SK-N-SH (cell line): ENCODE measurements at regions of chr4 and their contacts with region 1.

Region 1: GRCh38 chr4:3480528-3481112 is 17.5 kb downstream of the DOK7 start:
- DNase-seq: peak; percentile 92
- H3K4me3 ChIP-seq: peak overlapping the region in 1 of 2 experiments; percentile 57; a peak in 1 of 4 replicates
- H3K27ac ChIP-seq: no peak overlapping the region
- H3K4me1 ChIP-seq: peaks cover 0 to 19% of the 10 kb centered on the region in 2 experiments; a peak in 1 of 4 replicates
- H3K27me3 ChIP-seq: no peaks in the 10 kb centered on the region
- CTCF ChIP-seq: peak; percentile 97
- EP300 ChIP-seq: no peak
- RAD21 ChIP-seq: peak; percentile 79

Region 2: DNA sequence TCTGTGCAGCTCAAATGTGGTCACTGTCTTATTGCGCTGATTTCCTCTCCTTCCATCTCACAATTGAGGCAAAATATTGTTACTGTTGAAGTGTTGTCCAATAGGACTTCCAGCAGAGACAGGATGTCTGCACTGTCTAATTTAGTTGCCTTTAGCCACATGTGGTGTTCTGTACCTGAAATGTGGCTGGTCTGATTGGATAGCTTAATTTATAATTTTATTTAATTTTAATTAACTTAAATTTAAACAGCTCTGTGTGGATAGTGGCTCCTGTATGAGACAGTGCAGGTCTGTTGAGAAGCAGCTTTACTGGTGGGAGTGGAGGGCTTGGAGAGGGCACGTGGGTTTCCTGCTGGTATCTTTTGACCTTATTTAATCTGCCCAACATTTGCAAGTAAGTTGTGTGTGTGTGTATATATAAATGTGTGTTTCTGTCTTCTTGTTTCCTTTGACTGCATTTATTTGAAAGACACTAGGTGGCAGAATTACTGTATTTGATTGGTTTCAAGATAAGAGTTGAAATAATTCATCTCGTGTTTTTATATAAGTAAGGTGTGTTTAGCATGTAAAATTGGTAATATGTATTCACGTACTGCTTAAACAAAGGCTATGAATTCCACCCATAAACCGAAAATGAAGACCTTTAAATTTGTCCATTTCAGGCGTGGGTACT is 287.0 kb before region 1 on chr4:
- CTCF ChIA-PET with region 1: interaction called, 13 read pairs
- POLR2A ChIA-PET with region 1: no interaction called
- DNase-seq: peak; percentile 53
- H3K4me3 ChIP-seq: no peak overlapping the region
- H3K27ac ChIP-seq: peak overlapping the region in 1 of 2 experiments; percentile 94; a peak in 2 of 4 replicates
- H3K4me1 ChIP-seq: peaks cover 0 to 36% of the 10 kb centered on the region in 2 experiments; a peak in 2 of 4 replicates
- H3K27me3 ChIP-seq: no peaks in the 10 kb centered on the region
- CTCF ChIP-seq: peak; percentile 55
- EP300 ChIP-seq: peak in 1 of 2 experiments; percentile 44; a peak in 1 of 4 replicates
- RAD21 ChIP-seq: peak; percentile 40; the same call in 1 of the 2 replicates

Region 3: GRCh38 chr4:3442959-3443749 is 37.5 kb before region 1 on chr4:
- CTCF ChIA-PET with region 1: interaction called, 18 read pairs
- POLR2A ChIA-PET with region 1: no interaction called
- DNase-seq: peak; percentile 94
- H3K4me3 ChIP-seq: no peak overlapping the region
- H3K27ac ChIP-seq: no peak overlapping the region
- H3K4me1 ChIP-seq: no peaks in the 10 kb centered on the region
- H3K27me3 ChIP-seq: no peaks in the 10 kb centered on the region
- CTCF ChIP-seq: peak; percentile 90
- EP300 ChIP-seq: no peak
- RAD21 ChIP-seq: peak; percentile 86

Region 4: GRCh38 chr4:3470244-3471097 is 10.1 kb before region 1 on chr4:
- CTCF ChIA-PET with region 1: interaction called, 31 read pairs
- POLR2A ChIA-PET with region 1: no interaction called
- DNase-seq: no peak
- H3K4me3 ChIP-seq: no peak overlapping the region
- H3K27ac ChIP-seq: no peak overlapping the region
- H3K4me1 ChIP-seq: peaks cover 0 to 3% of the 10 kb centered on the region in 2 experiments; a peak in 1 of 4 replicates
- H3K27me3 ChIP-seq: no peaks in the 10 kb centered on the region
- CTCF ChIP-seq: no peak
- EP300 ChIP-seq: no peak
- RAD21 ChIP-seq: no peak

Region 5: DNA sequence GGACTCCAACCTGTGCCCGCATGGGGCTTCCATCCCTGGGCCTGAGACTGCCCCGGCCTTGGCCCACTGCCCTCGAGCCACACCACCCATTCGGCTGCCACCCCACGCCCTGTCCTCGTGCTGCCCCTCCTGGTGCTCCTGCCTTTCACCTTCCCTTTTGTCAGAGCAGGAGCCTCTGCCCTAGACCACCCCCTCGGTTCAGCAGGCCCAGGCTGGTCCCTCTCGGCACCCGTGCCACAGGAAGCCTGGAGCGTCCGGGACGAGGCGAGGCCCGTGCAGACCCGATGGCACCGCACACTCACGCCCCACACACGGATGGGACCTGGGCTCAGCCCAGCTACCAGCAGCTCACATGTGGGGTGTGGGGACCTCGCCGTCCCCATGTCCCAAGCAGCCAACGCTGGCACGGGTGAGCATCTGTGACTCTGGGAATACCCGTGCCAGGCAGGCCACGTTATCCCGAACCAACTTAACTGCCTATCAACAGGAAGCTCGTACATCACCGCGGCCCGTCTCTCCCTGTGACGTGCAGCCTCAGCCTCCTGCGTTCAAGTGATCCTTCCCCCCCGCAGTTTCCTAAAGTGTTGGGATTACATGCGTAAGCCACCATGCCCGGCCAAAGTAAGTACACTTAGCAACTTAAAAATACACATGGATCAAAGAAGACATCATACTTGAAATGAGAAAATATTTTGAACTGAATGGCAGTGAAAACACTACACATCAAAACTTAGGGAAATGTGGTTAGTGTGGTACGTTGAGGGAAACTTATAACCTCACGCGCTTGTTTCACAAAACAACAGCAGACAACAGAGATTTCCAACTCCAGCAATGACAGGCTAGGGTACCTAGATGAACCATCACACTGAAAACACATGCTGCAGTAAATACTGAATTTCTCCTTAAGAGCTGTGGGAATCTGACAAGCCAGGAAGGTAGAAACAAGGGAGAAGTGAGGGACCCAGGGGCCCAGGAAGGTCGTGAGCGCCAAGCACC is 22.6 kb after region 1 on chr4:
- CTCF ChIA-PET with region 1: interaction called, 10 read pairs
- POLR2A ChIA-PET with region 1: no interaction called
- DNase-seq: no peak
- H3K4me3 ChIP-seq: no peak overlapping the region
- H3K27ac ChIP-seq: no peak overlapping the region
- H3K4me1 ChIP-seq: no peaks in the 10 kb centered on the region
- H3K27me3 ChIP-seq: no peaks in the 10 kb centered on the region
- CTCF ChIP-seq: no peak
- EP300 ChIP-seq: no peak
- RAD21 ChIP-seq: no peak